IMR-90 (cell line): ENCODE measurements at regions of chr18 and their contacts with region 1.

Region 1: GRCh38 chr18:11851146-11851805 is at the start of gene CHMP1B:
- DNase-seq: peak; percentile 98
- ATAC-seq: peak; percentile 96
- H3K4me3 ChIP-seq: peak within 1 kb of the TSS; percentile 83
- H3K27ac ChIP-seq: peak within 1 kb of the TSS; percentile 84
- H3K4me1 ChIP-seq: peaks cover 10% of the 10 kb centered on the region
- H3K27me3 ChIP-seq: no peaks in the 10 kb centered on the region
- CTCF ChIP-seq: no peak
- POLR2A ChIP-seq: peak; percentile 95
- RAD21 ChIP-seq: peak; percentile 6; the same call in 1 of the 2 replicates
- total RNA-seq, gene CHMP1B: 39.4 and 69.7 TPM in 2 replicates

Region 2: GRCh38 chr18:11908182-11909060 is 57.1 kb after region 1 on chr18 and contains the start of gene MPPE1:
- CTCF ChIA-PET with region 1: no interaction called
- POLR2A ChIA-PET with region 1: no interaction called
- dilution Hi-C with region 1: no loop called
- in situ Hi-C with region 1: no loop called
- intact Hi-C with region 1: loop called (anchors 2 kb)
- DNase-seq: peak; percentile 83
- ATAC-seq: peak; percentile 93
- H3K4me3 ChIP-seq: peak within 1 kb of the TSS; percentile 86
- H3K27ac ChIP-seq: peak within 1 kb of the TSS; percentile 83
- H3K4me1 ChIP-seq: peaks cover 6% of the 10 kb centered on the region
- H3K27me3 ChIP-seq: no peaks in the 10 kb centered on the region
- CTCF ChIP-seq: no peak
- POLR2A ChIP-seq: peak; percentile 86
- RAD21 ChIP-seq: no peak
- total RNA-seq, gene MPPE1: 13.8 and 22.5 TPM in 2 replicates

Region 3: GRCh38 chr18:11947214-11948191 is 96.2 kb after region 1 on chr18:
- CTCF ChIA-PET with region 1: no interaction called
- POLR2A ChIA-PET with region 1: no interaction called
- dilution Hi-C with region 1: no loop called
- in situ Hi-C with region 1: no loop called
- intact Hi-C with region 1: loop called (anchors 10 kb)
- DNase-seq: peak; percentile 97
- ATAC-seq: peak; percentile 88
- H3K4me3 ChIP-seq: no peak overlapping the region
- H3K27ac ChIP-seq: peak overlapping the region; percentile 88
- H3K4me1 ChIP-seq: peaks cover 24% of the 10 kb centered on the region
- H3K27me3 ChIP-seq: no peaks in the 10 kb centered on the region
- CTCF ChIP-seq: no peak
- POLR2A ChIP-seq: no peak
- RAD21 ChIP-seq: no peak

Region 4: DNA sequence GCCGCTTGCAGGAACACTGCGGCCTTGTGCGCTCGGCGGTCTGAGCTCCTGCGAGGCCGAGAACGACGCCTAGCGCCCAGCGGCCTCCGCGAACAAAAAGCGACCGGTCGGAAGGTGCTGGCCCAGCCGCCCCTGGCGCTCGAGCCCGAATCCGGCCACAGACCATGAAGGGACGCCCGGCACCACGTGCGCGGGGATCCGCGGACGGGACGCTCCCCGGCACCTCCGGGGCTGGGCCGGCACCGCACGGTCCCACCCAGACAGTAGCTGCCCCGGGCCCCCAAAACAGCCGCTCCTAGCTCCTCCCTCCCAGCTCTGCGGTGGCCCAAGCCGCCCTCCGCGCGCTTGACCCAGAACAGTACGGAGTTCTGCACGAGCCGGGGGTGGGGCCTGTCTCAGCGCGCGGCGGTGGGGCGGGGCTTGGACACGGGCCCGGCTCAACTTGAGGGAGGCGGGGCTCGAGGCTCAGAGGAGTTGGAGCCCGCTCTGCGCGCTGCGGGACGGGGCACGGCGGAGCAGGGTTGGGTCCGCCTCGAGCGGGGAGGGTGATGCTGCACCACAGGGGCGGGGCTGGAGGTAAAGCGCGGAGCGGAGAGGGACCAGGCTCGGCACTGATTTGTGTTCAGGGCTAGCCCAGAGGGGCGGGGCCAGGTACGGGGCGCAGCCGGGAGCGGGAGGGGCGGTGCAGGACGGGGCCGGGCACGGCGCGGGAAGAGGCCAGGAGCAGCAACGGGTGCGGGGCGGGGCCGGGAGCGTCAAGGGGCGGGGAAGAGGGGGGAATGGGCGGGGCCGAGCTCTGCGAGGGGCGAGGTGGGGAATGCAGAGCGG is 129.5 kb after region 1 on chr18:
- CTCF ChIA-PET with region 1: no interaction called
- POLR2A ChIA-PET with region 1: no interaction called
- dilution Hi-C with region 1: no loop called
- in situ Hi-C with region 1: no loop called
- intact Hi-C with region 1: loop called (anchors 2 kb)
- DNase-seq: peak; percentile 96
- ATAC-seq: peak; percentile 92
- H3K4me3 ChIP-seq: peak overlapping the region; percentile 46
- H3K27ac ChIP-seq: peak overlapping the region; percentile 76
- H3K4me1 ChIP-seq: peaks cover 7% of the 10 kb centered on the region
- H3K27me3 ChIP-seq: no peaks in the 10 kb centered on the region
- CTCF ChIP-seq: 0 out of 2 replicates have a peak, but pooled peaks have one; percentile 15
- POLR2A ChIP-seq: peak; percentile 69
- RAD21 ChIP-seq: no peak

Region 5: GRCh38 chr18:12271376-12272235 is 420.3 kb after region 1 on chr18:
- CTCF ChIA-PET with region 1: no interaction called
- POLR2A ChIA-PET with region 1: no interaction called
- dilution Hi-C with region 1: no loop called
- in situ Hi-C with region 1: no loop called
- intact Hi-C with region 1: no loop called
- DNase-seq: peak; percentile 74
- ATAC-seq: peak; percentile 99
- H3K4me3 ChIP-seq: peak overlapping the region; percentile 53
- H3K27ac ChIP-seq: peak overlapping the region; percentile 23; the same call in 1 of the 2 replicates
- H3K4me1 ChIP-seq: no peaks in the 10 kb centered on the region
- H3K27me3 ChIP-seq: peaks cover 6% of the 10 kb centered on the region
- CTCF ChIP-seq: peak; percentile 58
- POLR2A ChIP-seq: no peak; the same call in 1 of the 2 replicates
- RAD21 ChIP-seq: peak; percentile 47

Region 6: GRCh38 chr18:12287684-12288402 is 436.6 kb after region 1 on chr18:
- CTCF ChIA-PET with region 1: no interaction called
- POLR2A ChIA-PET with region 1: no interaction called
- dilution Hi-C with region 1: no loop called
- in situ Hi-C with region 1: loop called (anchors 10 kb)
- intact Hi-C with region 1: no loop called
- DNase-seq: peak; percentile 95
- ATAC-seq: peak; percentile 95
- H3K4me3 ChIP-seq: peak overlapping the region; percentile 40
- H3K27ac ChIP-seq: peak overlapping the region; percentile 90
- H3K4me1 ChIP-seq: peaks cover 13% of the 10 kb centered on the region
- H3K27me3 ChIP-seq: no peaks in the 10 kb centered on the region
- CTCF ChIP-seq: 0 out of 2 replicates have a peak, but pooled peaks have one; percentile 11
- POLR2A ChIP-seq: peak; percentile 78; the same call in 1 of the 2 replicates
- RAD21 ChIP-seq: no peak